ENCODE measurements at regions of chr5 and their contacts with region 1.

Region 1: GRCh38 chr5:146965761-146966659 is 87.5 kb upstream of the PPP2R2B start:
- DNase-seq: peak; percentile 83
- ATAC-seq: peak; percentile 88
- H3K4me3 ChIP-seq: no peak overlapping the region
- H3K27ac ChIP-seq: no peak overlapping the region
- H3K4me1 ChIP-seq: no peaks in the 10 kb centered on the region
- H3K27me3 ChIP-seq: peaks cover 21% of the 10 kb centered on the region; the same call in 1 of the 2 replicates
- CTCF ChIP-seq: peak; percentile 76

Region 2: DNA sequence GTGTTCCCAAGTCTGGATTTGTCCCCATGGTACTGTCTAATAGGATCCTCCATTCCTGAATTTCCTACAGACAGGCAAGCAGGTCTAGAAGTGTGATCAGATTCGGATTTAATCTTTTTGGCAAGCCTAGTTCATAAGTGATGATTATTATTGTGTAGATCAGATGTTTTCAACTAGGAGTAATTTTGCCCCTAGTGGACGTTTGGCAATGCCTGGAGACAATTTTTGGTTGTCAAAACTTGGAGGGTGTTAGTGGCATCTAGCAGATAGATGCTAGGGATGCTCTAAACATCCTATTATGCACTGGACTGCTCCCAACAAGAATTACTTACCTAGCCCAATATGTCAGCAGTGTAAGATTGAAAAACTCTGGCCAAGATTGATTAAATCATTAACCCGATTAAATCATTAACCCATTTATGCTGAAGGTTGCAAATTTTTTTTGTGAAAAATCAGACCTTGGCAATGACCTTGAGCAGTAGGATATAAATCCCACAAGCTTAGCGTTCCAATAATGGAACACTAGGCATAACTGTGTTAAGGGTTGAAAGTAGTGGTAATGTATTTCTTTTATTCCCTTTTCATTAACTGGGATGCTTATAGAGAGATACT is 490.7 kb before region 1 on chr5:
- CTCF ChIA-PET with region 1: no interaction called
- POLR2A ChIA-PET with region 1: no interaction called
- intact Hi-C with region 1: no loop called
- DNase-seq: peak; percentile 37
- ATAC-seq: peak; percentile 40; the same call in 1 of the 2 replicates
- H3K4me3 ChIP-seq: no peak overlapping the region
- H3K27ac ChIP-seq: no peak overlapping the region
- H3K4me1 ChIP-seq: no peaks in the 10 kb centered on the region
- H3K27me3 ChIP-seq: no peaks in the 10 kb centered on the region
- CTCF ChIP-seq: peak; percentile 67

Region 3: DNA sequence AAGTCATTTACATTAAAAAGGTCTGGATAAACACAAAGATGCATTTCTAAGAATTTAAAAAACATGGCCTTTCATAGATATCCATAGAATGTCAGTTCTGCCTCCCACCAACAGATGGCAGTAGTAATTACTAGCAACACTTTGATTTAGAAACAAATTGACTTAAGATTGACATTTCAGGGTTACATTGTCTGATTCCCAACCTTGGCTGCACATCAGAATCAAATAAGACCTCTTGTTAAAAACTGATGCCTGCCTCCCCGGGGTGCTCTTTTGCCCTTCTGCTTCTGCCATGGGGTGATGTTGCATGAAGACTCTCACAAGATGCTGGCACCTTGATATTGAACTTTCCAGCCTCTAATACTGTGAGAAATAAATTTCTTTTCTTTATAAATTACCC is 303.8 kb before region 1 on chr5:
- CTCF ChIA-PET with region 1: no interaction called
- POLR2A ChIA-PET with region 1: no interaction called
- intact Hi-C with region 1: loop called (anchors 1 kb)
- DNase-seq: peak; percentile 74
- ATAC-seq: no peak
- H3K4me3 ChIP-seq: no peak overlapping the region
- H3K27ac ChIP-seq: no peak overlapping the region
- H3K4me1 ChIP-seq: no peaks in the 10 kb centered on the region
- H3K27me3 ChIP-seq: peaks cover 46% of the 10 kb centered on the region
- CTCF ChIP-seq: peak; percentile 89

Region 4: DNA sequence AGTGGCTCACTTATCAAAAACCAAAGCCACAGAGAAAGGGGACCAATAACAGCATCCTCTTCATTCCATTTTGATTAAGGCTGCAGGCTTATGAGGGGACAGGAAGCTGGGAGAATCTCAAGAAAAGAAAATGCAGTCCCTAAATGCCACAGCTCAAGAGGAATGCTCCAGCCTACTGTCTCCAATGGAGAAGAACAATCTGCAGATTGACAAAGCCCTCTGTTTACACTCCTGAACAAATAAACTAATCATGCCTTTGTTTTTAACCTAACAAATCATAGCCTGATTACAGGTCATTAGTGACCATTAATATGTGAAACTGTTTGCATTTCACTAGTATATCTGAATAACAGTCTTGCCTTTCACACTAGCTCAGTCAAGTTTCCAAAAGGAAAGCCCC is 113.9 kb before region 1 on chr5:
- CTCF ChIA-PET with region 1: no interaction called
- POLR2A ChIA-PET with region 1: no interaction called
- intact Hi-C with region 1: no loop called
- DNase-seq: no peak
- ATAC-seq: no peak
- H3K4me3 ChIP-seq: no peak overlapping the region
- H3K27ac ChIP-seq: no peak overlapping the region
- H3K4me1 ChIP-seq: no peaks in the 10 kb centered on the region
- H3K27me3 ChIP-seq: 0 out of 2 replicates have a peak, but pooled peaks cover 4% of the 10 kb centered on the region
- CTCF ChIP-seq: no peak

Region 5: DNA sequence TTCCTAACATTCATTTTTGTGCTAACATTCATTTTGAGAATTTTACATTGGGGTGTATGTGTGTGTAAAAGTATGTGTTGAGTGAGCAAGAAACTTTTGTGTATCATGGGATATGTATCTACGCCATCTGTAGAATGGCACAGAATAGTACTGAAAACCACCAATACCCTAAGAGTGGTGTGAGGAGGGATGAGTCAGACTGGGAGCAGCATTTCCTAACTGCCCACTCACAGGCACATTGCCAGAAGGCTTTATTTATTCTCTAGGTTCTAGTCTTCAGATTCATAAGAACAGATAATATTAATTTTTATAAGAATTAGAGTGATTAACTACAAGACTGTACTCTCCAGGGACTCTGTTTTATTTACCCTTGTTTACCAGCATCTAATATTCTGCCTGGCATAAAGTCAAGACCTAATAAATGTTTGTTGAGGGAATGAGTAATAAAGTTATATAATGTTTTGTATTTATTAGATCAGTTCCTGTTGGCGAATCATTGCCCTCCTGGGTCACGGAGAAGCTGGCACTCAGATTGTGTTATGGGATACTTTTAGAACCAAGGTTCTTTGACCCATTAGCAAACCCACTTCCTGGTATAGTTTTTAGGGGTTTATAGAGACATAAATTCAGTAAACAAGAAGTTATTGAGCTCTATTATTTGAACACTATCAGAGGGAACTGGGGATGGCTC is 71.7 kb after region 1 on chr5:
- CTCF ChIA-PET with region 1: no interaction called
- POLR2A ChIA-PET with region 1: interaction called, 36 read pairs
- intact Hi-C with region 1: no loop called
- DNase-seq: peak; percentile 78
- ATAC-seq: peak; percentile 49; the same call in 1 of the 2 replicates
- H3K4me3 ChIP-seq: no peak overlapping the region
- H3K27ac ChIP-seq: peak overlapping the region; percentile 62
- H3K4me1 ChIP-seq: peaks cover 11% of the 10 kb centered on the region; the same call in 1 of the 2 replicates
- H3K27me3 ChIP-seq: peaks cover 6% of the 10 kb centered on the region; the same call in 1 of the 2 replicates
- CTCF ChIP-seq: no peak

Measured in PC-3 (cell line).